HEK293 (cell line): ENCODE measurements at regions of chr12 and their contacts with region 1.

Region 1: GRCh38 chr12:10153271-10154144 is 18.4 kb downstream of the OLR1 start:
- H3K4me3 ChIP-seq: peak overlapping the region; percentile 39
- H3K27ac ChIP-seq: peak overlapping the region; percentile 3; the same call in 1 of the 2 replicates
- H3K4me1 ChIP-seq: no peaks in the 10 kb centered on the region
- CTCF ChIP-seq: peak; percentile 76

Region 2: DNA sequence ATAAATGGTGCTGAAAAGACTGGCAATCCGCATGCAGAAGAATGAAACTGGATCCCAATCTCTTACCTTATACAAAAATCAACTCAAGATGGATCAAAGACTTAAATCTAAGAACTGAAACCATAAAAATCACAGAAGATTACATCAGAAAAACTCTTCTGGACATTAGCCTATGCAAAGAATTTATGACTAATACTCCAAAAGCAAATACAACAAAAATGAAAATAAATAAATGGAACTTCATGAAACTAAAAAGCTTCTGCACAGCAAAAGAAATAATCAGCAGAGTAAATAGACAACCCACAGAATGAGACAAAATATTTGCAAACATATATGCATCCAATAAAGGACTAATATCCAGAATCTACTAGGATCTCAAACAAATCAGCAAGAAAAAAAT is 40.4 kb before region 1 on chr12:
- CTCF ChIA-PET with region 1: no interaction called
- POLR2A ChIA-PET with region 1: no interaction called
- H3K4me3 ChIP-seq: no peak overlapping the region
- H3K27ac ChIP-seq: no peak overlapping the region
- H3K4me1 ChIP-seq: no peaks in the 10 kb centered on the region
- CTCF ChIP-seq: no peak

Region 3: GRCh38 chr12:10170292-10170691 is 16.8 kb after region 1 on chr12:
- CTCF ChIA-PET with region 1: interaction called, 17 read pairs
- POLR2A ChIA-PET with region 1: interaction called, 5 read pairs
- H3K4me3 ChIP-seq: no peak overlapping the region
- H3K27ac ChIP-seq: no peak overlapping the region
- H3K4me1 ChIP-seq: no peaks in the 10 kb centered on the region
- CTCF ChIP-seq: no peak

Region 4: DNA sequence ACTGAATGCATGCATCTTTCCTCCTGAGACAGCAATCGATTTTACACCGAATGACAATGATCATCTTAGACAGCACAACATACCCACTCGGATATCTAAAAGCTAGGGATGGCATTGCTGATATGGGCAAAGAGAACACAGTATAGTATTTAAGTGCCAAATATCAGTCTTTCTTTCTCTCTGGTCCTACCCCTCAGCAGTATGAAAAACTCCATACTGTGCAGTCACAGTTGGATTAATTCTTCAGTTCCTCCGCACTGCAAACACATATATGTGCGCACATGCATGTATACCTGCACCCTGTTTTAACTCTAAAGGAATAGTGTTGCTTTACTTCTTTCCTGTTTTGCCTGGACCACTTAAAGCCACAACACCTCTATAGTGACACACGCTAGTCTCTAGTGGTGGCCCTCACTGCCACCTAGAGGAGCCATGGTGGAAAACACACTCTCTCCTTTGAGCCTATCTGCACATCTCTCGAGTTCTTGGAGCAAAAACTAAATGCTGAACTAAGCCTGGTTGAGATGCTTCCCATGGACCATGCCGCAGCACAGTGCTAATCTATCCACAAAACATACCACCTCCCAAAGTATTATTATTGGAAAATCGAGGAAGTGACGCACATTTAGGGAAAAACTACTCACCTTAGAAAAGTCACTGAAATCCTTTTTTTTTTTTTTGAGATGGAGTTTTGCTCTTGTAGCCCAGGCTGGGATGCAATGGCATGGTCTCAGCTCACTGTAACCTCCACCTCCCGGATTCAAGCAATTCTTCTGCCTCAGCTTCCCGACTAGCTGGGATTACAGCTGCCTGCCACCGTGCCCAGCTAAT is 37.3 kb after region 1 on chr12:
- CTCF ChIA-PET with region 1: interaction called, 29 read pairs
- POLR2A ChIA-PET with region 1: interaction called, 3 read pairs
- H3K4me3 ChIP-seq: no peak overlapping the region
- H3K27ac ChIP-seq: no peak overlapping the region
- H3K4me1 ChIP-seq: no peaks in the 10 kb centered on the region
- CTCF ChIP-seq: peak; percentile 38; the same call in 1 of the 2 replicates